Activated CD4-positive, alpha-beta T cell treated with anti-CD3 and anti-CD28 coated beads for 36 hours (primary cell): ENCODE measurements at regions of chr19 and their contacts with region 1.

Region 1: GRCh38 chr19:13150187-13150930 is at the starts of genes IER2 and STX10:
- DNase-seq: peak; percentile 96
- ATAC-seq: peak; percentile 52
- H3K4me3 Mint-ChIP-seq: peak within 1 kb of the TSS; percentile 87
- H3K27ac Mint-ChIP-seq: peak within 1 kb of the TSS; percentile 97
- H3K4me1 Mint-ChIP-seq: peaks cover 18% of the 10 kb centered on the region
- H3K27me3 Mint-ChIP-seq: no peaks in the 10 kb centered on the region
- total RNA-seq, gene IER2: 109 to 118 TPM
- total RNA-seq, gene STX10: 64.8 to 71.4 TPM

Region 2: GRCh38 chr19:12881172-12881808 is 269.1 kb before region 1 on chr19 and contains the start of gene DNASE2:
- CTCF ChIA-PET with region 1: interaction called, 4 read pairs
- POLR2A ChIA-PET with region 1: no interaction called
- intact Hi-C with region 1: loop called in 1 of 2 experiments (anchors 1 kb)
- DNase-seq: peak; percentile 96
- ATAC-seq: peak; percentile 75
- H3K4me3 Mint-ChIP-seq: peak within 1 kb of the TSS; percentile 88
- H3K27ac Mint-ChIP-seq: peak within 1 kb of the TSS; percentile 82
- H3K4me1 Mint-ChIP-seq: peaks cover 24% of the 10 kb centered on the region
- H3K27me3 Mint-ChIP-seq: no peaks in the 10 kb centered on the region
- total RNA-seq, gene DNASE2: 22.5 to 24.3 TPM

Region 3: GRCh38 chr19:13104360-13104847 is 46.0 kb before region 1 on chr19:
- CTCF ChIA-PET with region 1: interaction called, 6 read pairs
- POLR2A ChIA-PET with region 1: interaction called, 4 read pairs
- intact Hi-C with region 1: loop called (anchors 1 kb)
- DNase-seq: peak; percentile 84
- ATAC-seq: peak; percentile 48
- H3K4me3 Mint-ChIP-seq: peak overlapping the region; percentile 78
- H3K27ac Mint-ChIP-seq: peak overlapping the region; percentile 90
- H3K4me1 Mint-ChIP-seq: peaks cover 34% of the 10 kb centered on the region
- H3K27me3 Mint-ChIP-seq: no peaks in the 10 kb centered on the region

Region 4: GRCh38 chr19:13212759-13213330 is 62.5 kb after region 1 on chr19:
- CTCF ChIA-PET with region 1: interaction called, 3 read pairs
- POLR2A ChIA-PET with region 1: interaction called, 3 read pairs
- intact Hi-C with region 1: loop called in 1 of 2 experiments (anchors 1 kb)
- DNase-seq: peak; percentile 90
- ATAC-seq: peak; percentile 51
- H3K4me3 Mint-ChIP-seq: no peak overlapping the region
- H3K27ac Mint-ChIP-seq: no peak overlapping the region
- H3K4me1 Mint-ChIP-seq: peaks cover 32% of the 10 kb centered on the region
- H3K27me3 Mint-ChIP-seq: no peaks in the 10 kb centered on the region

Region 5: GRCh38 chr19:13839130-13839937 is 689.0 kb after region 1 on chr19:
- CTCF ChIA-PET with region 1: no interaction called
- POLR2A ChIA-PET with region 1: no interaction called
- intact Hi-C with region 1: loop called (anchors 2 to 10 kb)
- DNase-seq: peak; percentile 96
- ATAC-seq: peak; percentile 68
- H3K4me3 Mint-ChIP-seq: peak overlapping the region; percentile 94
- H3K27ac Mint-ChIP-seq: peak overlapping the region; percentile 95
- H3K4me1 Mint-ChIP-seq: peaks cover 54% of the 10 kb centered on the region
- H3K27me3 Mint-ChIP-seq: no peaks in the 10 kb centered on the region

Region 6: GRCh38 chr19:14366498-14366915 is 1216.1 kb after region 1 on chr19:
- CTCF ChIA-PET with region 1: no interaction called
- POLR2A ChIA-PET with region 1: no interaction called
- intact Hi-C with region 1: loop called in 1 of 2 experiments (anchors 5 kb)
- DNase-seq: peak; percentile 95
- ATAC-seq: peak; percentile 50
- H3K4me3 Mint-ChIP-seq: peak overlapping the region; percentile 45
- H3K27ac Mint-ChIP-seq: peak overlapping the region; percentile 100
- H3K4me1 Mint-ChIP-seq: peaks cover 78% of the 10 kb centered on the region
- H3K27me3 Mint-ChIP-seq: no peaks in the 10 kb centered on the region